CD8-positive, alpha-beta memory T cell (primary cell): ENCODE measurements at regions of chr6 and their contacts with region 1.

Region 1: DNA sequence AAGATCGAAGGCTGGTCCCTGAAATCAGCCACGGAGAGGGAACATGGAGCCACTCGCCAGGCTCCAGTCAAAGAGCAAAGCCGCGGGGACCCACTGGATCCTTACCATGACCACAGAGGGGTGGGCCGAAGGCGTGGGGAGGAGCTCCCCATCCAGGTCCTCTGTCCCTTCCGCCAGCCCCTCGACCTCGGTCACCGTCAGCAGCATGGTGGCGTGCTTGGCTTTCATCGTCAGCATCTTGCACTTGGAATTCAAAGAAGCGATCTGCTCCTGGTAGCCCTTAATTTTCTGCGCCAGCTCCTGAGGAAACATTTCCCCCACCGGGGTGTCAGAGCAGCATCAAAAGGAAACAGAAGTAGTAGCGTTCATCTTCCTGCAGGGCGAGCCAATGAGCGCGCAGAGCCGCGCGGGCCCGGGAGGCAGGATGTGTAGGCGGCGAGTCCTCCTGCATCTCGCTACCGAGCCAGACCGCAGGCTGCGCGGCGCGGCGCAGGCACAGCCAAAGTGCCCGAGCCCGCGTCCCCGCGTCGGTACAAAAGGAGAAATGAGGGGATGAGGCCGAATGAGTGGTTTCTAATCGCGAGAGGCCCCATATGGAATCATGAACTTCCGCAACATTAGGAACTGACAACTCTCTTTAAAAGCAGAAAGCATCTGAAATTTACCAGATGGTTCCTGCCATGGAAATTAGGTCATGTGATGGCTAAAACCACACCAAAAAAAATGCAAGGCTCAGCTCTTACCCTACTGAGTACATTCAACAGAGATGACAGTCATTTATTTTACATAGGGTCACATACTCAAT is 335.2 kb downstream of the SYNE1 start:
- DNase-seq: peak; percentile 81 to 91 (median 88)
- H3K4me3 ChIP-seq: peak overlapping the region; percentile 97
- H3K4me3 Mint-ChIP-seq: peak overlapping the region; percentile 95 to 100 (median 100)
- H3K27ac ChIP-seq: peak overlapping the region; percentile 85
- H3K27ac Mint-ChIP-seq: peak overlapping the region; percentile 93 to 100 (median 98)
- H3K4me1 ChIP-seq: peaks cover 31% of the 10 kb centered on the region
- H3K4me1 Mint-ChIP-seq: peaks cover 30 to 49% (median 42%) of the 10 kb centered on the region in 3 donors
- H3K27me3 ChIP-seq: no peaks in the 10 kb centered on the region
- H3K27me3 Mint-ChIP-seq: no peaks in the 10 kb centered on the region

Region 2: GRCh38 chr6:152290693-152291092 is 11.3 kb before region 1 on chr6:
- CTCF ChIA-PET with region 1: interaction called, 16 read pairs
- POLR2A ChIA-PET with region 1: no interaction called
- DNase-seq: no peak
- H3K4me3 ChIP-seq: no peak overlapping the region
- H3K4me3 Mint-ChIP-seq: no peak overlapping the region
- H3K27ac ChIP-seq: no peak overlapping the region
- H3K27ac Mint-ChIP-seq: no peak overlapping the region
- H3K4me1 ChIP-seq: no peaks in the 10 kb centered on the region
- H3K4me1 Mint-ChIP-seq: peaks cover 9 to 16% (median 14%) of the 10 kb centered on the region in 3 donors
- H3K27me3 ChIP-seq: no peaks in the 10 kb centered on the region
- H3K27me3 Mint-ChIP-seq: no peaks in the 10 kb centered on the region

Region 3: DNA sequence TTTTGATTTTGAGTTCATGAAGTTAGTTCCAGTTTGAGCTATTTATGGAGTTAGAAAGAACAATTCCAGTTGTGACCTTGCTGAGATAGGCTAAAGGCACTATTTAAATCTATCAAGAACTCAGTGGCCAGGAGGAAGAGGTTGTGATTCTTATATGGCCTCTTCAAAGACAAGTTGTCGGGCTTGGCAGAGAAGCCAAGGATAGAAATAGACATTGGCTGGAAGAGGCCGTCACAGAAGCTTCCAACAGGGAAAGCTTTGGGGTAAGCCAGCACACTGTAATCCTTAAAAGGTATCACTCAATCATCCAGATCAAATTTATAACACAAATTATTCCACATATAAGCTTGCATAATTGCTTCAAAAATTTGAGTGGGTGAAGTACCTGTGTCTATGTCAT is 49.1 kb after region 1 on chr6:
- CTCF ChIA-PET with region 1: no interaction called
- POLR2A ChIA-PET with region 1: no interaction called
- DNase-seq: no peak
- H3K4me3 ChIP-seq: no peak overlapping the region
- H3K4me3 Mint-ChIP-seq: no peak overlapping the region
- H3K27ac ChIP-seq: no peak overlapping the region
- H3K27ac Mint-ChIP-seq: no peak overlapping the region
- H3K4me1 ChIP-seq: no peaks in the 10 kb centered on the region
- H3K4me1 Mint-ChIP-seq: no peaks in the 10 kb centered on the region
- H3K27me3 ChIP-seq: no peaks in the 10 kb centered on the region
- H3K27me3 Mint-ChIP-seq: peaks cover 0 to 2% of the 10 kb centered on the region in 2 donors

Region 4: GRCh38 chr6:152391179-152391880 is 89.4 kb after region 1 on chr6:
- CTCF ChIA-PET with region 1: no interaction called
- POLR2A ChIA-PET with region 1: no interaction called
- DNase-seq: no peak
- H3K4me3 ChIP-seq: no peak overlapping the region
- H3K4me3 Mint-ChIP-seq: no peak overlapping the region
- H3K27ac ChIP-seq: no peak overlapping the region
- H3K27ac Mint-ChIP-seq: no peak overlapping the region
- H3K4me1 ChIP-seq: no peaks in the 10 kb centered on the region
- H3K4me1 Mint-ChIP-seq: peaks cover 0 to 2% (median under 1%) of the 10 kb centered on the region in 3 donors
- H3K27me3 ChIP-seq: no peaks in the 10 kb centered on the region
- H3K27me3 Mint-ChIP-seq: peaks cover 0 to 2% of the 10 kb centered on the region in 2 donors